Activated naive CD4-positive, alpha-beta T cell treated with anti-CD3 and anti-CD28 coated beads for 36 hours (primary cell): ENCODE measurements at regions of chr6 and their contacts with region 1.

Region 1: DNA sequence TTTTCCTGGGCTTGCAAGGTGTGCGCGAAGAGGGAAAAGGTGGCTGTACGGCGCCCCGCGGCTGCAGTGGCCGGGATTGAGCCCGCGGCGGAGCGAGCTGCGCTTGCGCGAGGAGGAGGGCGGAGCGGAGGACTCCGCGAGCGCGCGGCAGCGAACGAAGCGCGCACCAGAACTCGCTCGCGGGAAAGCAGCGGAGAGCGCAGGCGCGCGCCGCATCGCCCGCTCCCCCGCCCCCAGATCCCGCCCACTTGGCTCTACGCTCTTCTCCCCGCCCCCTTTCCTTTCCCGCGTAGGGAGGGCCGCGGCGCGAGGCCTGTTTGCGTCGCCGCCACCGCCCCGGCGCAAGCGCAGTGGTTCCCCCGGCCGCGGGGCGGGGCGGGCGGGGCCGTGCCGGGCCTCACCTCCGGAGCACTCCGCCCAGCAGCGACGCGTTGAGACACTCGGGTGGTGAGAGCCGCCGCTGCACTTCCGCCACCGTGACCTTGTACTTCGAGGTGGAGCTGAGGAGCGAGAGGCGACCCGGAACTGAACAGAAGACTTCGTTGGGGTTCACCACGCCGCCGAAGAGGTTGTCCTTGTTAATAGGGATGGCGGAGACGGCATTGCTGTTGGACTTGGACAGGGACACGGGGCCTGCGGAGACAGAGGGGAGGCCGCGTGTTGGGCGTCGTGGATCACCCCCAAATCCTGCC is 10.6 kb downstream of the TFAP2A start:
- DNase-seq: peak; percentile 95
- H3K4me3 Mint-ChIP-seq: peak overlapping the region; percentile 84
- H3K27ac Mint-ChIP-seq: peak overlapping the region; percentile 59
- H3K4me1 Mint-ChIP-seq: peaks cover 7% of the 10 kb centered on the region
- H3K27me3 Mint-ChIP-seq: peaks cover 63% of the 10 kb centered on the region

Region 2: DNA sequence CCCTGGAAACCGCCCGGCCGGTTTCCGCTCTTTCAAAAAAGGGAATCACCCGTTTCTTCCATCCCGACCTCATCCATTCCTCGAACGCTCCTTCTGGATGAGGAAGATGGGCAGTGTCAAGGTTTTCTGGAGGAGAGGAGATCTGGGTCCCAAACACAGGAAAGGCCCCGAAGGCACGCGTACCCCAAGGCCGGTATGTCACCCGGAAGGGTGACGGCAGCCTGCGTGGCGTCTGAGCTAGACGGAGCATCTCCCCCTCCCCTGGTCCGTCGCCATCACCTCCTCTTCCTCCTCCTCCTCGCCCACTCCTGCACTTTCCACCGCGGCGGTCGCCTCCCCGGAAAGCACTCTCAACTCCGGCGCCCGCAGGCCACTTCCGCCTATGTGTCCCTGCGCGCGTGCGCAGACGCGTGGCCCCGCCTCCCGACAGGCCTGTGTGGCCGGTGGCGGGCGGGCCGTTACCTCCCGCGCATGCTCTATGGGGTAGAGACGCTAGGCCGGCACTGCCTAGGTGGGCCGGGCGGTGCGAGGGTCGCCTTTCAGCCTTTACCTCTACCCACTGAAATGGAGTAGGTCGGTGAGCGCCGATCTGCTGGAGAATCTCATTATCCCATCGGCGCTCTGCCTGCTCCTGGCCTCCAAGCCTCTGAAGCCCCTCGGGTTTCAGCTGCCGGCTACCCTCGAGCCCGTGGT is 1968.9 kb before region 1 on chr6 and contains the start of gene SLC35B3:
- CTCF ChIA-PET with region 1: no interaction called
- intact Hi-C with region 1: loop called (anchors 1 kb)
- DNase-seq: peak; percentile 97
- H3K4me3 Mint-ChIP-seq: peak within 1 kb of the TSS; percentile 89
- H3K27ac Mint-ChIP-seq: peak within 1 kb of the TSS; percentile 94
- H3K4me1 Mint-ChIP-seq: peaks cover 32% of the 10 kb centered on the region
- H3K27me3 Mint-ChIP-seq: no peaks in the 10 kb centered on the region
- total RNA-seq, gene SLC35B3: 7.7 to 8.0 TPM

Region 3: GRCh38 chr6:10421158-10421920 is 17.1 kb after region 1 on chr6:
- CTCF ChIA-PET with region 1: no interaction called
- intact Hi-C with region 1: no loop called
- DNase-seq: no peak
- H3K4me3 Mint-ChIP-seq: no peak overlapping the region
- H3K27ac Mint-ChIP-seq: no peak overlapping the region
- H3K4me1 Mint-ChIP-seq: peaks cover 18% of the 10 kb centered on the region
- H3K27me3 Mint-ChIP-seq: peaks cover 89% of the 10 kb centered on the region

Region 4: GRCh38 chr6:10528170-10528981 is 124.1 kb after region 1 on chr6:
- CTCF ChIA-PET with region 1: no interaction called
- intact Hi-C with region 1: loop called (anchors 5 kb)
- DNase-seq: peak; percentile 38
- H3K4me3 Mint-ChIP-seq: peak overlapping the region; percentile 80
- H3K27ac Mint-ChIP-seq: peak overlapping the region; percentile 71
- H3K4me1 Mint-ChIP-seq: peaks cover 48% of the 10 kb centered on the region
- H3K27me3 Mint-ChIP-seq: no peaks in the 10 kb centered on the region

Region 5: GRCh38 chr6:10722820-10723566 is 318.7 kb after region 1 on chr6 and contains the start of gene TMEM14C:
- CTCF ChIA-PET with region 1: no interaction called
- intact Hi-C with region 1: loop called (anchors 2 kb)
- DNase-seq: peak; percentile 94
- H3K4me3 Mint-ChIP-seq: peak within 1 kb of the TSS; percentile 89
- H3K27ac Mint-ChIP-seq: peak within 1 kb of the TSS; percentile 91
- H3K4me1 Mint-ChIP-seq: peaks cover 44% of the 10 kb centered on the region
- H3K27me3 Mint-ChIP-seq: no peaks in the 10 kb centered on the region
- total RNA-seq, gene TMEM14C: 77.0 to 81.1 TPM

Region 6: GRCh38 chr6:10740061-10740460 is 335.8 kb after region 1 on chr6:
- CTCF ChIA-PET with region 1: no interaction called
- intact Hi-C with region 1: no loop called
- DNase-seq: no peak
- H3K4me3 Mint-ChIP-seq: no peak overlapping the region
- H3K27ac Mint-ChIP-seq: no peak overlapping the region
- H3K4me1 Mint-ChIP-seq: no peaks in the 10 kb centered on the region
- H3K27me3 Mint-ChIP-seq: no peaks in the 10 kb centered on the region

Region 7: DNA sequence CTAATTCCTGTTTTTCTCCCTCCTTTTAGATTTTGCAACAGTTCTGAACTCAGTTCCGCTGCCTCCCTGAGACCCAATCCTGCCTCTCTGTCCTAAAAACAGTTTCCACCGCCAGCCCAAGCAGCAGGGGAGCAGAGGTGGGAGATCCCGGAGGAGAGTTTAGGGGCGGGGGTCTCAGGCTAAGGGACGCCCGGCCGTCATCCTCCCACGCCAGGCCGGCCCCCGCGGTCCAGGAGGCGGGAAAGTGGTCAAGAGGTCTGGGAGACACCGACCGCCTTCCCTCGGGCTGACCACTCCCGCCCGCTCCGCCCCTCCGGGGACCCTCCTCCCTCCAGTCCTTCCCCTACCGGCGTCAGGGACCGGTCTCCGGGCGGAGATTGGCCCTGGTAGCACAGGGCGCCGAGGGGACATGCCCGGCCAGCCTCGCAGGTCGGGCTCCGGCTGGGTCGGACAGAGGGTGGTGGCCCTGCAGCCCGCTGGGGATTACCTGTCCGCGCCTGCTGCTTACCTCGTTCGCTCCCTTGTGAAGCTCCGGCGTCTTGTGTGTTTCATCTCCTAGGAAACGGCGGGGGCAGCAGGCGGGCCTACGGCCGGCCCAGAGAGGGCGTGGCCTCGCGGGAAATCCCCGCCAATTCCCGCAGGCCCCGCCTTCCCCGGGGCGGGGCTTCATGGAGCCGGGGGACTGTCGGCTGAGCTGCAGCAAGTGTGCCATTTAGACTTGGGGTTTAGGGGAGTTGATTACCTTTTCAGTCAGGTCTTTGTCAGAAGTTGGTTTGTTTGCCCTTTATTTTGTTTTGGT is 433.9 kb after region 1 on chr6 and contains the start of gene MAK:
- CTCF ChIA-PET with region 1: no interaction called
- intact Hi-C with region 1: loop called (anchors 1 kb)
- DNase-seq: peak; percentile 86
- H3K4me3 Mint-ChIP-seq: peak within 1 kb of the TSS; percentile 74
- H3K27ac Mint-ChIP-seq: peak within 1 kb of the TSS; percentile 85
- H3K4me1 Mint-ChIP-seq: peaks cover 17% of the 10 kb centered on the region
- H3K27me3 Mint-ChIP-seq: peaks cover 50% of the 10 kb centered on the region
- total RNA-seq, gene MAK: 0.12 to 0.14 TPM

Region 8: DNA sequence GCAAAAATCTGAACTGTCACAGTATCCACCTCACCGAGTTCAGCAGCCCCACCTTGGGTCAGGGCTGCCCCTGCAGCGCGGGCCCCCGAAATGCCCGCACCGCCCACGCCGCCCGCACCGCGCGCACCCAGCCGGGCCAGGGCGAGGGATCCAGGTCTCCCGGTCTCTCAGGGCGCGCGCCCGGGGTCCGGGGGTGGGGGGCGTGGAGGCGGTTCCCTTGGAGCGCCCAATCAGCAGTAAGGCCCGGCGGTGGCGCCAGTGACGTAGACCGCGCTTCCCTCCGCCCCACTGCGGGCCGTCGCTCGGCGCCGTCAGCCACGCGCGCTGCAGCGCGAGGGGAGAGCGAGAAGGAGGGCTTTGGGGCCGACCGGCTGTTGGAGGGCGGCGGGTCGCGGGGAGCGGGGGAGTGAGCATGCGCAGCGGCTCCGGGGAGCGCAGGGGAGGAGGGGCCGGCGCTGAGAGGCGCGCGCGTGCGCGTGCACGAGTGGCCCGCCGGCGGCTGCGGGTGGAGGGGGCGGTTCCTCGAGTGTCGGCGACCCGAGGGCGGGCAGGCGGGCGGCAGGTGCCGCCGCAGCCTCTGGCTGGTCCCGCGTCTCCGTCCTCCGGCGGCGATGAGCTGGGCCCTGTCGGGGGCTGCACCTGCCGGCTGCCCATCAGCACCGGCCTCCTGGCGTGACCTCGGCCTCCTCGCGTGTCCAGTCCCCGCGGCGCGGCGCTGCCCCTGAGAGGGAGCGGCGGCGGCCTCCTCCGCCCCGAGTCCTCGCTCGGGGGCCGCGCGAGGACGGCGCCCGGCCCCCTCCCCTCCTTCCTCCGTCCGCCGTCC is 1133.2 kb after region 1 on chr6 and contains the start of gene TMEM170B:
- CTCF ChIA-PET with region 1: no interaction called
- intact Hi-C with region 1: loop called (anchors 5 kb)
- DNase-seq: peak; percentile 84
- H3K4me3 Mint-ChIP-seq: peak within 1 kb of the TSS; percentile 78
- H3K27ac Mint-ChIP-seq: no peak within 1 kb of the TSS
- H3K4me1 Mint-ChIP-seq: peaks cover 9% of the 10 kb centered on the region
- H3K27me3 Mint-ChIP-seq: peaks cover 6% of the 10 kb centered on the region
- total RNA-seq, gene TMEM170B: 0.40 to 0.57 TPM